MCF 10A (cell line): ENCODE measurements at regions of chr16 and their contacts with region 1.

Region 1: GRCh38 chr16:67816240-67817031 is 9.7 kb downstream of the TSNAXIP1 start:
- DNase-seq: peak; percentile 75
- H3K4me3 Mint-ChIP-seq: no peak overlapping the region
- H3K27ac Mint-ChIP-seq: no peak overlapping the region
- H3K4me1 Mint-ChIP-seq: no peaks in the 10 kb centered on the region
- H3K27me3 Mint-ChIP-seq: no peaks in the 10 kb centered on the region
- CTCF ChIP-seq: peak; percentile 98

Region 2: GRCh38 chr16:67672739-67673662 is 143.4 kb before region 1 on chr16:
- CTCF ChIA-PET with region 1: interaction called, 15 read pairs
- POLR2A ChIA-PET with region 1: interaction called, 3 read pairs
- intact Hi-C with region 1: no loop called
- DNase-seq: peak; percentile 83
- H3K4me3 Mint-ChIP-seq: no peak overlapping the region
- H3K27ac Mint-ChIP-seq: peak overlapping the region; percentile 73
- H3K4me1 Mint-ChIP-seq: peaks cover 15% of the 10 kb centered on the region
- H3K27me3 Mint-ChIP-seq: no peaks in the 10 kb centered on the region
- CTCF ChIP-seq: peak; percentile 68

Region 3: GRCh38 chr16:67841764-67842508 is 25.5 kb after region 1 on chr16 and contains the start of gene THAP11:
- CTCF ChIA-PET with region 1: interaction called, 45 read pairs
- POLR2A ChIA-PET with region 1: interaction called, 3 read pairs
- intact Hi-C with region 1: no loop called
- DNase-seq: peak; percentile 97
- H3K4me3 Mint-ChIP-seq: peak within 1 kb of the TSS; percentile 84
- H3K27ac Mint-ChIP-seq: peak within 1 kb of the TSS; percentile 86
- H3K4me1 Mint-ChIP-seq: peaks cover 16% of the 10 kb centered on the region
- H3K27me3 Mint-ChIP-seq: no peaks in the 10 kb centered on the region
- CTCF ChIP-seq: peak; percentile 85
- total RNA-seq, gene THAP11: 18.3 and 20.5 TPM in 2 replicates

Region 4: DNA sequence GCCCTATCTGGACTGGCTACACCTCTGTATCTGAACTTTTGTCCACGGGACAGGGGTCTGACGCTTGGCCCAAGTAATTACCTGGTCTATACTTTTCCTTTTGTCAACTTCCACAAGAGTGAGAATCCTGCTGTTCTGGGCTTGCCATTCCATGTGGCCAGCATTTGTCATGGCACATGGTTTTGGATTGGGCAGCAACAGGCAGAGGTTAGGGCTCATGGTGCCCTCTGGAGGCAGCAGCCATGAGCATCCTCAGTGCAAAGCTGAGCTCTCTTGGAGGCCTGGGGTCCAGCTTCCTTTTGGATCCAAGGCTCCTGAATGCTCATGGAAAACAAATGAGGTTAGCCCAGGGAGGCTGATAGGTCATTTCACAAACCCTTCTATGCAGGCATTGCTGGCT is 48.9 kb after region 1 on chr16:
- CTCF ChIA-PET with region 1: interaction called, 54 read pairs
- POLR2A ChIA-PET with region 1: interaction called, 4 read pairs
- intact Hi-C with region 1: loop called (anchors 1 kb)
- DNase-seq: peak; percentile 63
- H3K4me3 Mint-ChIP-seq: no peak overlapping the region
- H3K27ac Mint-ChIP-seq: peak overlapping the region; percentile 96
- H3K4me1 Mint-ChIP-seq: peaks cover 27% of the 10 kb centered on the region
- H3K27me3 Mint-ChIP-seq: no peaks in the 10 kb centered on the region
- CTCF ChIP-seq: peak; percentile 39

Region 5: DNA sequence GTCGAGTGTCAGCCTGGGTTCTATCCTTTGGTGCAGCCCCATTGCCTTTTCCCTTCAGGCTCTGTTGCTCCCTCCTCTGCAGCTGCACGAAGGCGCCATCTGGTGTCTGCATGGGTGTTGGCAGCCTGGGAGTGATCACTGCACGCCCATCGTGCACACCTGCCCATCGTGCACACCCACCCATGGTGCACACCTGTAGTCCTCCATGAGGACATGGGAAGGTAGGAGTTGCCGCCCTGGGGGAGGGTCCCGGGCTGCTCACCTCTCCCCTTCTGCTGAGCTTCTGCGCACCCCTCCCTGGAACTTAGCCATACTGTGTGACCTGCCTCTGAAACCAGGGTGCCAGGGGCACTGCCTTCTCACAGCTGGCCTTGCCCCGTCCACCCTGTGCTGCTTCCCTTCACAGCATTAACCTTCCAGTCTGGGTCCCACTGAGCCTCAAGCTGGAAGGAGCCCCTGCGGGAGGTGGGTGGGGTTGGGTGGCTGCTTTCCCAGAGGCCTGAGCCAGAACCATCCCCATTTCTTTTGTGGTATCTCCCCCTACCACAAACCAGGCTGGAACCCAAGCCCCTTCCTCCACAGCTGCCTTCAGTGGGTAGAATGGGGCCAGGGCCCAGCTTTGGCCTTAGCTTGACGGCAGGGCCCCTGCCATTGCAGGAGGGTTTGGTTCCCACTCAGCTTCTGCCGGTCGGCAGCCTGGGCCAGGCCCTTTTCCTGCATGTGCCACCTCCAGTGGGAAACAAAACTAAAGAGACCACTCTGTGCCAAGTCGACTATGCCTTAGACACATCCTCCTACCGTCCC is 112.3 kb after region 1 on chr16:
- CTCF ChIA-PET with region 1: interaction called, 22 read pairs
- POLR2A ChIA-PET with region 1: no interaction called
- intact Hi-C with region 1: loop called (anchors 1 kb)
- DNase-seq: peak; percentile 75
- H3K4me3 Mint-ChIP-seq: no peak overlapping the region
- H3K27ac Mint-ChIP-seq: no peak overlapping the region
- H3K4me1 Mint-ChIP-seq: peaks cover under 1% of the 10 kb centered on the region
- H3K27me3 Mint-ChIP-seq: no peaks in the 10 kb centered on the region
- CTCF ChIP-seq: peak; percentile 86

Region 6: DNA sequence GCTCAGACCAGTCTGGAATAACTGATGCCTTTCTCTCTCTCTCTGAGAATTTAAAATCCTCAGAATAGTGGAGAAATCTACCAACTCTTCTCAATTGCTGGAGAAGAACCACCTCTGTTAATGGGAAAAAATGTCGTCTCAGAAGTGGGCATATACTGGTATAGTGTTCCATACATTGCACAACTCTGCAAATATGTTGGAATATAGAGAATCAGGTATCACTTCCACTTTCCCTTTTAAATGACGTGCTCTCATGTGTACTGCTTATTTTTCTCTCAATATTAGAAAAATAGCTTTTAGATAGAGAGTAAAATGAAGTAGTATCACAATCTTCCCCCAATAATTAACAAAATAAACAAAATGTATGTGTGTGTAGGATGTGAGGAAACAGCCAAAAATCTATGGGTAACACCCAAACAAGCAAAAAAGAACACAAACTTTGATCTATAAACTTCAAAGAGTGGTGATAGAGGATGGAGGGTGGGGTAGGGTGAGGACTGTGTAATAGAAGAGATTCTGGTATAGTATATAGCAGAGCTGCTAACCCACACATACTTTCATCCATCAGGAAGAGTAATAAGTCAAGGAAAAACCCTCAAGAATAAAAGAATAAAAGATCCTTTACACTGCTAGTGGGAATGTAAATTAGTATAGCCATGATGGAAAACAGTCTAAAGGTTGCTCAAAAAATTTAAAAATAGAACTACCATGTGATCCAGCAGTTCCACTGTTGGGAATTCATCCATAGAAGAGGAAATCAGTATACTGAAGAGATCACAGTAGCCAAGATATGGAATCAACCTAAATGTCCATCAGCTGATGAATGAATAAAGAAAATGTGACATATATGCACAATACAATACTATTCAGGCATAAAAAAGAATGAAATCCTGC is 315.6 kb after region 1 on chr16:
- CTCF ChIA-PET with region 1: no interaction called
- POLR2A ChIA-PET with region 1: no interaction called
- intact Hi-C with region 1: no loop called
- DNase-seq: no peak
- H3K4me3 Mint-ChIP-seq: no peak overlapping the region
- H3K27ac Mint-ChIP-seq: no peak overlapping the region
- H3K4me1 Mint-ChIP-seq: peaks cover 25% of the 10 kb centered on the region
- H3K27me3 Mint-ChIP-seq: no peaks in the 10 kb centered on the region
- CTCF ChIP-seq: no peak